ENCODE measurements at regions of chr6 and their contacts with region 1.

Region 1: GRCh38 chr6:157569543-157569942 is 188.6 kb downstream of the ZDHHC14 start:
- DNase-seq: no peak
- H3K4me3 Mint-ChIP-seq: no peak overlapping the region
- H3K27ac Mint-ChIP-seq: peak overlapping the region; percentile 28
- H3K4me1 Mint-ChIP-seq: peaks cover 22% of the 10 kb centered on the region
- H3K27me3 Mint-ChIP-seq: peaks cover 2% of the 10 kb centered on the region

Region 2: DNA sequence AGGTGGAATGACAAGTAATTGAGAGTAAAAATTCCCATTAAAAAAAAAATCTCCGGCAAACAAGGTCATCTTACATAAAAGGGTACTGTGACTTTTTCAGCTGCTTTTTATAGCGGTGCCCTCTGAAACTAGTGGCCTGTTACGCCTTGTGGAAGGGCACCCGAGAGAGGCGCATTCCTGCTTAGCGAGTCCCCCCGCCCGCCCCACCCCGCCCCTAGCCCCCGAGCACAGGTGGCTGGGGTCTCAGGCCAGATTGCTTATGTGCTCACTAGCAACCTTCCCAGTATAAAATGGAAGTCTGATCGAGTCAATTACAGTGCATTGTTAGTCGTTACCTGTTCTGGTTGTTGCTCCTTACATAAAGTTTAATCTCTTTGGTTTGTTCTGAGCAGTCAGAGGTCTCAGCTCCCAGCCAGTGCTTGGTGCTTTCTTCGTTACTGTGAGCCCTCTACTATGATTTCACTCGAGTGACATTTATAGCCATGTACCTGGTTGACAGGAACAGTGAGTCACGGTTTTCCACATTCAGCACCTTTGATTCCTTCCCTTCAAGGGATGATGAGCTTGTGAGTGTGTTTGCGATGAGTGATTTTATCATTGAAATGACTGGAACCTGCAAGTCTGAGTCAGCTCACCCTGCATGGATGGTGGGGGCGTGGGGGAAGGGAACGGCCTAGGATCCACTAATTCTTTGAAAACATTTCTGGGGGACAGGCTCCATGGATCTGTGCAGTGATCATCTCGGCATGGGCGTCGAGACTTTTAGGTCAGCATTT is 140.9 kb before region 1 on chr6:
- intact Hi-C with region 1: loop called (anchors 2 kb)
- DNase-seq: no peak
- H3K4me3 Mint-ChIP-seq: no peak overlapping the region
- H3K27ac Mint-ChIP-seq: peak overlapping the region; percentile 69
- H3K4me1 Mint-ChIP-seq: peaks cover 28% of the 10 kb centered on the region
- H3K27me3 Mint-ChIP-seq: no peaks in the 10 kb centered on the region

Measured in activated T-helper 2 cell treated with anti-CD3 and anti-CD28 coated beads, Interferon-gamma antibody, Interleukin-2, Interleukin-4, amounts not matched to agents 10 μg/mL and 5 μg/mL and 100 μg/mL, durations not matched to agents 14 hours and 24 hours and 36 hours (primary cell).